ENCODE measurements at regions of chr22 and their contacts with region 1.

Region 1: GRCh38 chr22:38705235-38706100 is at the start of gene GTPBP1:
- DNase-seq: peak; percentile 96 to 100 (median 100)
- H3K4me3 ChIP-seq: peak within 1 kb of the TSS; percentile 20 to 94
- H3K4me3 Mint-ChIP-seq: peak within 1 kb of the TSS; percentile 91 to 96 (median 94)
- H3K27ac ChIP-seq: peak within 1 kb of the TSS; percentile 94
- H3K27ac Mint-ChIP-seq: peak within 1 kb of the TSS; percentile 92 to 99 (median 98)
- H3K4me1 ChIP-seq: peaks cover 52% of the 10 kb centered on the region
- H3K4me1 Mint-ChIP-seq: peaks cover 48 to 69% (median 53%) of the 10 kb centered on the region in 4 donors
- H3K27me3 ChIP-seq: no peaks in the 10 kb centered on the region
- H3K27me3 Mint-ChIP-seq: peaks cover 0 to 4% of the 10 kb centered on the region in 2 donors
- total RNA-seq, gene GTPBP1: 94.1 to 96.6 TPM

Region 2: GRCh38 chr22:38506118-38506962 is 199.1 kb before region 1 on chr22 and contains the start of gene DDX17:
- CTCF ChIA-PET with region 1: no interaction called
- POLR2A ChIA-PET with region 1: no interaction called
- intact Hi-C with region 1: loop called (anchors 1 kb)
- DNase-seq: peak; percentile 96 to 98 (median 96)
- H3K4me3 ChIP-seq: peak within 1 kb of the TSS; percentile 75 to 94
- H3K4me3 Mint-ChIP-seq: peak within 1 kb of the TSS; percentile 98 to 100 (median 99)
- H3K27ac ChIP-seq: peak within 1 kb of the TSS; percentile 99
- H3K27ac Mint-ChIP-seq: peak within 1 kb of the TSS; percentile 99 to 100 (median 100)
- H3K4me1 ChIP-seq: peaks cover 44% of the 10 kb centered on the region
- H3K4me1 Mint-ChIP-seq: peaks cover 37 to 54% (median 45%) of the 10 kb centered on the region in 4 donors
- H3K27me3 ChIP-seq: no peaks in the 10 kb centered on the region
- H3K27me3 Mint-ChIP-seq: no peaks in the 10 kb centered on the region
- total RNA-seq, gene DDX17: 927 to 960 TPM

Region 3: DNA sequence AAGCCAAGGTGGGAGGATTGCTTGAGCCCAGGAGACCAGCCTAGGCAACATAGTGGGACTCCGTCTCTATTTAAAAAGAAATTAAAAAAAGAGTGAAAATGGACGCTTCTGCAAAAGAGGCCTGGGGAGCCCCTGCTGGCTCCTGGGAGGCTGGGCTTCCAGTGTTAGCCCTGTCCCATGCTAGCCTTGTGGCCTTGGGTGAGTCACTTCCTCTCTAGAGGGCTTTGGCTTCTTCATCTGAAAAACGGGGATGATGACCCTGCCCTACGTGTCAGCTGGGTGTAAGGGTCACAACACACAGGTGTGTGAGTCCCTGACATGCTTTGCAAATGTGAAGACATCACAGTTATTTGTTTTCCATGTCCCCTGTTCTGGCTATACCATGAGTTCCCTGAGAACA is 82.1 kb before region 1 on chr22:
- CTCF ChIA-PET with region 1: no interaction called
- POLR2A ChIA-PET with region 1: no interaction called
- intact Hi-C with region 1: no loop called
- DNase-seq: no peak
- H3K4me3 ChIP-seq: no peak overlapping the region
- H3K4me3 Mint-ChIP-seq: no peak overlapping the region
- H3K27ac ChIP-seq: no peak overlapping the region
- H3K27ac Mint-ChIP-seq: no peak overlapping the region
- H3K4me1 ChIP-seq: no peaks in the 10 kb centered on the region
- H3K4me1 Mint-ChIP-seq: no peaks in the 10 kb centered on the region
- H3K27me3 ChIP-seq: no peaks in the 10 kb centered on the region
- H3K27me3 Mint-ChIP-seq: peaks cover 3 to 10% of the 10 kb centered on the region in 2 donors

Region 4: DNA sequence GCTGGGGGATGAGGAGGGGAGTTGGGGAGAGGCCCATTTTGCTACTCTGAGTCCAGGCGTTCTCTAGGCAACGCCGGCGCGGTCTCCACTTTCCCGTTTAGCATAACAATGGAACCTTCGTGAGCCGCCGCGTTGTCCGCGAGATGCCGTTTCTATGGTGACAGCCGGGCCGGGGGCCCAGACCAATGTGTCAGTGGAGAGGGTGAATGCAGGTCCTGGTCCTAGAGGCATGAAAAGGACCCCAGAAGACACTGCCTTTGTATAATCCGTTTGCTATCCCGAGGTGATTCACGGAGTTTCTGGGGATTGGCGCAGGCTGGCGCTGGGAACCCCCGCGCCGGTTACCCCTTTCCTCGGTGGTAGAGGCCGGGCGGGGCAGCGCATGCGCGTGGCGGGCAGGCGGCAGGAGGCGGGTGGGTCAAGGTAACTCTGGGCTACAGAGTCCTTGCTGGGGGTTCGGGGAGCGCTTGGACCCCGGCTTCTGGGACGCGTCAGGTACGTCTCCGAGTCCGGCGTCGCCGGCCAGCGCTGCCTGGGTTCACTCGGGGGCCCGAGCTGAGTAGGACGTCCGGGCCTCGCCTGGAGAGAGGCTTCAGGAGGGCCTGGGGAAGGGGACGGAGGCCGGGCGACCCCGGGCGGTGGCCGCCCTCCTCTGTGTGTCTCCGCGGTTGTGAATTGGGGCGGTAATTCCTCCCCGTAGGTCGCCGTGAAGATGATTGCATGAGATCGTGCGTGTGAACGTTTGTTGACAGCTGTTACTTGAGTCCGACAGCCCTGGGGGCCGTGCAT is 49.0 kb before region 1 on chr22 and contains the starts of genes CBY1 and FAM227A:
- CTCF ChIA-PET with region 1: no interaction called
- POLR2A ChIA-PET with region 1: interaction called, 11 read pairs
- intact Hi-C with region 1: loop called (anchors 2 kb)
- DNase-seq: peak; percentile 85 to 92 (median 86)
- H3K4me3 ChIP-seq: peak within 1 kb of the TSS; percentile 90 to 98
- H3K4me3 Mint-ChIP-seq: peak within 1 kb of the TSS; percentile 93 to 99 (median 96)
- H3K27ac ChIP-seq: peak within 1 kb of the TSS; percentile 88
- H3K27ac Mint-ChIP-seq: peak within 1 kb of the TSS; percentile 98 to 100 (median 99)
- H3K4me1 ChIP-seq: peaks cover 16% of the 10 kb centered on the region
- H3K4me1 Mint-ChIP-seq: peaks cover 10 to 24% (median 19%) of the 10 kb centered on the region in 4 donors
- H3K27me3 ChIP-seq: no peaks in the 10 kb centered on the region
- H3K27me3 Mint-ChIP-seq: no peaks in the 10 kb centered on the region
- total RNA-seq, gene CBY1: 30.4 to 35.2 TPM
- total RNA-seq, gene FAM227A: 0.44 TPM in 1 of 2 experiments, not detected in the other

Region 5: GRCh38 chr22:38694049-38694448 is 11.4 kb before region 1 on chr22:
- CTCF ChIA-PET with region 1: interaction called, 5 read pairs
- POLR2A ChIA-PET with region 1: interaction called, 30 read pairs
- intact Hi-C with region 1: no loop called
- DNase-seq: no peak
- H3K4me3 ChIP-seq: no peak overlapping the region
- H3K4me3 Mint-ChIP-seq: no peak overlapping the region
- H3K27ac ChIP-seq: no peak overlapping the region
- H3K27ac Mint-ChIP-seq: peak overlapping the region in 1 of 7 donors; percentile 36
- H3K4me1 ChIP-seq: peaks cover 33% of the 10 kb centered on the region
- H3K4me1 Mint-ChIP-seq: peaks cover 44 to 66% (median 53%) of the 10 kb centered on the region in 4 donors
- H3K27me3 ChIP-seq: no peaks in the 10 kb centered on the region
- H3K27me3 Mint-ChIP-seq: no peaks in the 10 kb centered on the region

Region 6: GRCh38 chr22:38724926-38725571 is 19.6 kb after region 1 on chr22:
- CTCF ChIA-PET with region 1: interaction called, 9 read pairs
- POLR2A ChIA-PET with region 1: interaction called, 153 read pairs
- intact Hi-C with region 1: loop called (anchors 2 kb)
- DNase-seq: peak in 3 of 5 donors; percentile 52 to 57 (median 54)
- H3K4me3 ChIP-seq: no peak overlapping the region
- H3K4me3 Mint-ChIP-seq: peak overlapping the region in 1 of 8 donors; percentile 63
- H3K27ac ChIP-seq: no peak overlapping the region
- H3K27ac Mint-ChIP-seq: peak overlapping the region; percentile 58 to 88 (median 77)
- H3K4me1 ChIP-seq: no peaks in the 10 kb centered on the region
- H3K4me1 Mint-ChIP-seq: peaks cover 6 to 14% (median 9%) of the 10 kb centered on the region in 4 donors
- H3K27me3 ChIP-seq: no peaks in the 10 kb centered on the region
- H3K27me3 Mint-ChIP-seq: no peaks in the 10 kb centered on the region

Region 7: GRCh38 chr22:38755911-38756532 is 50.6 kb after region 1 on chr22 and contains the start of gene SUN2:
- CTCF ChIA-PET with region 1: no interaction called
- POLR2A ChIA-PET with region 1: interaction called, 186 read pairs
- intact Hi-C with region 1: loop called (anchors 1 kb)
- DNase-seq: peak; percentile 92 to 95 (median 92)
- H3K4me3 ChIP-seq: peak within 1 kb of the TSS; percentile 72 to 98
- H3K4me3 Mint-ChIP-seq: peak within 1 kb of the TSS; percentile 97 to 99 (median 99)
- H3K27ac ChIP-seq: peak within 1 kb of the TSS; percentile 74
- H3K27ac Mint-ChIP-seq: peak within 1 kb of the TSS; percentile 90 to 99 (median 98)
- H3K4me1 ChIP-seq: peaks cover 64% of the 10 kb centered on the region
- H3K4me1 Mint-ChIP-seq: peaks cover 35 to 81% (median 53%) of the 10 kb centered on the region in 4 donors
- H3K27me3 ChIP-seq: no peaks in the 10 kb centered on the region
- H3K27me3 Mint-ChIP-seq: no peaks in the 10 kb centered on the region
- total RNA-seq, gene SUN2: 988 to 1,004 TPM